GM10248 (cell line): ENCODE measurements at regions of chr2 and their contacts with region 1.

Region 1: DNA sequence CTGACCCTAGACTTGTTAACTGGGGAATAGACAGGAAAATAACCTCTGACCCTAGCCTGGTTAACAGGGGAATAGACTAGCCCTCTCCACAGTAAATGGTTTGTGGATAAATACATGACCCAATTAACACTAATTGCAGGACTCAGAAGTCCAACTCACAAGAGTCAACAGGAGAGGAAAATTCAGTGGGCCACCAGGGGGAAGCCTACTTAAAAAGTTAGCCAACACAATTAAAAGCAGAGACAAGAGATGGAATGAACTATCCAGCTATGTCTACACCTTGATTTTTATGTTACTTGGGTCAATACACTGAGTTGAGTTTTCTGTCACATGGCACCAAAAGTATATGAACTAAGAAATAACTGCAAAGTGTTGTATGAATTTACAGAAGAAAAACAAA is 158.8 kb upstream of the SLC39A10 start:
- DNase-seq: peak; percentile 26
- CTCF ChIP-seq: peak; percentile 39

Region 2: GRCh38 chr2:195451160-195451559 is 47.0 kb before region 1 on chr2:
- CTCF ChIA-PET with region 1: no interaction called
- POLR2A ChIA-PET with region 1: no interaction called
- DNase-seq: no peak
- CTCF ChIP-seq: no peak

Region 3: GRCh38 chr2:195509551-195509950 is 11.4 kb after region 1 on chr2:
- CTCF ChIA-PET with region 1: interaction called, 23 read pairs
- POLR2A ChIA-PET with region 1: no interaction called
- DNase-seq: no peak
- CTCF ChIP-seq: no peak

Region 4: GRCh38 chr2:195664528-195664927 is 166.4 kb after region 1 on chr2:
- CTCF ChIA-PET with region 1: interaction called, 53 read pairs
- POLR2A ChIA-PET with region 1: no interaction called
- DNase-seq: no peak
- CTCF ChIP-seq: no peak